Heart left ventricle (tissue), 16 donors: ENCODE measurements at regions of chr13 and their contacts with region 1.

Region 1: GRCh38 chr13:58630794-58631193 is 999.2 kb downstream of the PCDH17 start:
- DNase-seq: no peak
- ATAC-seq: no peak
- H3K4me3 ChIP-seq: no peak overlapping the region
- H3K27ac ChIP-seq: no peak overlapping the region
- H3K4me1 ChIP-seq: no peaks in the 10 kb centered on the region
- H3K27me3 ChIP-seq: no peaks in the 10 kb centered on the region
- CTCF ChIP-seq: no peak
- POLR2A ChIP-seq: no peak

Region 2: GRCh38 chr13:58598241-58598640 is 32.6 kb before region 1 on chr13:
- intact Hi-C with region 1: no loop called
- DNase-seq: no peak
- ATAC-seq: no peak
- H3K4me3 ChIP-seq: no peak overlapping the region
- H3K27ac ChIP-seq: no peak overlapping the region
- H3K4me1 ChIP-seq: no peaks in the 10 kb centered on the region
- H3K27me3 ChIP-seq: no peaks in the 10 kb centered on the region
- CTCF ChIP-seq: no peak
- POLR2A ChIP-seq: no peak

Region 3: DNA sequence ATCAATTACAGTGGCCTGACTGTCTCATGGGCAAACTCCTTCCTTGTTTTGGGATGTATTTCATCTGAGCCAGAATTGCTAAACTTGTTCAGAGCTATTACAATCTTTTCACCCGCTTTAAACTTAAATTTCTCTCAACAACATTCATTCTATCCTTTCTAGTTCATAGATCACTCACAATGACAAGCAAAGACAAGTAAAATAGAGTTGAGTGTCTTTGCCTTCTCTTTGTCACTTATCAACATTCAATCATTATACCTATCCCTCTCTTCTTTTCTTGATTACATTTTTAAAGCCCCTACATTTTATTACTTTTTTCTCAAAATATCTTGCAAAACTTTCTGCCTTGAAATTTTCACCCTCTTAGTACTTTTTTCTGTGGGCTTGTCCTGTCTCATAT is 113.9 kb after region 1 on chr13:
- intact Hi-C with region 1: no loop called
- DNase-seq: no peak
- ATAC-seq: no peak
- H3K4me3 ChIP-seq: no peak overlapping the region
- H3K27ac ChIP-seq: no peak overlapping the region
- H3K4me1 ChIP-seq: no peaks in the 10 kb centered on the region
- H3K27me3 ChIP-seq: no peaks in the 10 kb centered on the region
- CTCF ChIP-seq: no peak
- POLR2A ChIP-seq: no peak

Region 4: GRCh38 chr13:58804832-58805231 is 174.0 kb after region 1 on chr13:
- intact Hi-C with region 1: no loop called
- DNase-seq: no peak
- ATAC-seq: no peak
- H3K4me3 ChIP-seq: no peak overlapping the region
- H3K27ac ChIP-seq: no peak overlapping the region
- H3K4me1 ChIP-seq: no peaks in the 10 kb centered on the region
- H3K27me3 ChIP-seq: no peaks in the 10 kb centered on the region
- CTCF ChIP-seq: no peak
- POLR2A ChIP-seq: no peak

Region 5: GRCh38 chr13:59409211-59409610 is 778.4 kb after region 1 on chr13:
- intact Hi-C with region 1: loop called in 1 of 10 experiments (anchors 5 kb)
- DNase-seq: peak; percentile 68 to 82 (median 75)
- ATAC-seq: peak; percentile 42 to 85 (median 78)
- H3K4me3 ChIP-seq: no peak overlapping the region
- H3K27ac ChIP-seq: peak overlapping the region in 1 of 12 donors; percentile 14
- H3K4me1 ChIP-seq: peaks cover 0 to 18% (median 5%) of the 10 kb centered on the region in 12 donors
- H3K27me3 ChIP-seq: no peaks in the 10 kb centered on the region
- CTCF ChIP-seq: no peak
- POLR2A ChIP-seq: no peak